ENCODE measurements at regions of chr12 and their contacts with region 1.

Region 1: DNA sequence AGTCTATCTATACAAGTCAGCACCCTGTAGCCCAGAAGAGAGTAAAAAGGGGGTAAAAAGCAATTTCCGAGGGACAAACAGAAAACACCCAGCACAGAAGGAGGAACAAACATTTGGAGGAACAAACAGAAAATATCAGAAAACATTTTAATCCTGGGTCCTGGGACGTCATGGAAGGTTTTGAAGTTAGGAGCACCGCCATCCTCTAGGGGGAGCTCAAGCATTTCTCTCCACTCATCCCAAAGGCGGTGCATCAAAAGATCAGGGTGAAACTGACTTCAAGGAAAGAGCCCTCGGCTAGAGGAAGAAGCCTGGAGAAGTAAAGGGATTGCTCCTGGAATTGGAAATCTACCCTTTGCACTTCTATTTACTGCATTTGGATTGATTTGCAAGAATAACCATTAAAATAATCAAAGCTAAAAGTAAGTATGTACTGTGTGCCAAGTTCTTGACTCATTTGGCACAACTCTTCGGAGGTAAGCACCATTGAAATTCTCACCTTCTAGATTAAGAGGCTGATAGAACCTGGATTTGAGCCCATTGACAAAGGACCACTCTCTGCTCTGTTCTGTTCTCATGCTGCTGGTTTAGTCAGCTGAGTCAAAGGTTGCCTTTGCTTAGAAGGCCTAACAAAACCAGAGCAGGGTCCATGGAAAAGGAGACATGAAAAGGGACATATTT is 17.2 kb upstream of the POC1B start:
- DNase-seq: peak; percentile 63
- H3K4me3 ChIP-seq: no peak overlapping the region
- H3K27ac ChIP-seq: no peak overlapping the region
- H3K4me1 ChIP-seq: peaks cover 0 to 5% of the 10 kb centered on the region in 2 experiments; a peak in 3 of 4 replicates
- H3K27me3 ChIP-seq: no peaks in the 10 kb centered on the region
- CTCF ChIP-seq: peak; percentile 93
- EP300 ChIP-seq: no peak
- RAD21 ChIP-seq: peak; percentile 98

Region 2: DNA sequence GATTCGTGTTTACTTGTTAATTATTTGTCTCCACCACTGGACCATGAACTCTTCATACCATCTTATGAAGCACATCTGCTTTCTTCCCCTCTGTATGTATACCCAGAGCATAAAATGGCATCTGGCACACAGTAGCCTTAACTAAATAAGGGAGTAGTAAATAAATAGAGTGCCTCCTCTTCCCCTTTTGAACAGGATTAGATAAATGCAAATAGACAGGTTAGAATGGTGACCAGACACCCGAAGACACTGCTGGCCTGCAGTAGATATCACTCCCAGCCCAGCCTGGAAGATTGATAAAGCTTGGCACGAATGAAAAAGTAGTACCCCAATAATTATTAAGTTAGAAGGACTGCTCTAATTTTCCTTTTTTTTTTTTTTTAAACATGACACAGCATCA is 25.3 kb before region 1 on chr12:
- CTCF ChIA-PET with region 1: no interaction called
- POLR2A ChIA-PET with region 1: no interaction called
- DNase-seq: no peak
- H3K4me3 ChIP-seq: no peak overlapping the region
- H3K27ac ChIP-seq: no peak overlapping the region
- H3K4me1 ChIP-seq: peaks cover 0 to 16% of the 10 kb centered on the region in 2 experiments; a peak in 1 of 4 replicates
- H3K27me3 ChIP-seq: no peaks in the 10 kb centered on the region
- CTCF ChIP-seq: no peak
- EP300 ChIP-seq: no peak
- RAD21 ChIP-seq: no peak

Region 3: GRCh38 chr12:89529738-89530137 is 13.3 kb before region 1 on chr12:
- CTCF ChIA-PET with region 1: interaction called, 11 read pairs
- POLR2A ChIA-PET with region 1: interaction called, 3 read pairs
- DNase-seq: peak; percentile 69
- H3K4me3 ChIP-seq: no peak overlapping the region; a peak in 1 of 4 replicates
- H3K27ac ChIP-seq: no peak overlapping the region
- H3K4me1 ChIP-seq: peaks cover 0 to 5% of the 10 kb centered on the region in 2 experiments; a peak in 2 of 4 replicates
- H3K27me3 ChIP-seq: no peaks in the 10 kb centered on the region
- CTCF ChIP-seq: peak; percentile 80
- EP300 ChIP-seq: no peak
- RAD21 ChIP-seq: peak; percentile 91

Region 4: DNA sequence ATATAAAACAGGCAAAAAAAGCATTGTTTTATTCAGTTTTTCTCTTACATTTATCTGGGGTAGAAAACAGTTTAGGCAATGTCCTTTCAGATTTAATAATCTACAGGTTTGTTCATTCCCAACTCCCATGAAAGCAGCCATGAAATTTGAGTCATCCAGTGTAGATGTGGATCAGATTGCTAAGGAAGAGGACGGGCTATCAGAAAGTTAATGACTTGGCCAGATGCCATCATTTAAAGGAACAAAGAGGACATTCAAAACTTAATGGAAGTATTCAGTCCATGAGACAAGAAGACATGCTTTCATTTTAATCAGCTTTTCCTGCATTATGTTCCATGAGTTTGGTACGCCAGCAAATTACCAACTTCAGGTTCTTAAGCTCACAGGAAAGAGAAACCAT is 13.9 kb after region 1 on chr12:
- CTCF ChIA-PET with region 1: interaction called, 22 read pairs
- POLR2A ChIA-PET with region 1: no interaction called
- DNase-seq: no peak
- H3K4me3 ChIP-seq: no peak overlapping the region
- H3K27ac ChIP-seq: 0 out of 4 replicates have a peak overlapping the region, but pooled peaks of 1 of the 2 experiments have one; percentile 13
- H3K4me1 ChIP-seq: no peaks in the 10 kb centered on the region
- H3K27me3 ChIP-seq: no peaks in the 10 kb centered on the region
- CTCF ChIP-seq: no peak
- EP300 ChIP-seq: no peak
- RAD21 ChIP-seq: no peak

Region 5: GRCh38 chr12:89573051-89573810 is 30.2 kb after region 1 on chr12:
- CTCF ChIA-PET with region 1: no interaction called
- POLR2A ChIA-PET with region 1: no interaction called
- DNase-seq: no peak
- H3K4me3 ChIP-seq: no peak overlapping the region
- H3K27ac ChIP-seq: no peak overlapping the region
- H3K4me1 ChIP-seq: peaks cover 7 to 14% of the 10 kb centered on the region in 2 experiments; a peak in 3 of 4 replicates
- H3K27me3 ChIP-seq: no peaks in the 10 kb centered on the region
- CTCF ChIP-seq: no peak
- EP300 ChIP-seq: no peak
- RAD21 ChIP-seq: no peak

Region 6: GRCh38 chr12:89707703-89708564 is 164.9 kb after region 1 on chr12:
- CTCF ChIA-PET with region 1: interaction called, 17 read pairs
- POLR2A ChIA-PET with region 1: no interaction called
- DNase-seq: peak; percentile 60
- H3K4me3 ChIP-seq: peak overlapping the region; percentile 91 to 94
- H3K27ac ChIP-seq: peak overlapping the region; percentile 85 to 96
- H3K4me1 ChIP-seq: peaks cover 0 to 2% of the 10 kb centered on the region in 2 experiments; a peak in 3 of 4 replicates
- H3K27me3 ChIP-seq: no peaks in the 10 kb centered on the region
- CTCF ChIP-seq: peak; percentile 17; the same call in 1 of the 2 replicates
- EP300 ChIP-seq: no peak
- RAD21 ChIP-seq: no peak

Region 7: GRCh38 chr12:90102957-90103652 is 560.1 kb after region 1 on chr12:
- CTCF ChIA-PET with region 1: interaction called, 29 read pairs
- POLR2A ChIA-PET with region 1: no interaction called
- DNase-seq: peak; percentile 19
- H3K4me3 ChIP-seq: no peak overlapping the region
- H3K27ac ChIP-seq: no peak overlapping the region
- H3K4me1 ChIP-seq: peaks cover 0 to 27% of the 10 kb centered on the region in 2 experiments; a peak in 2 of 4 replicates
- H3K27me3 ChIP-seq: no peaks in the 10 kb centered on the region
- CTCF ChIP-seq: peak; percentile 71
- EP300 ChIP-seq: no peak
- RAD21 ChIP-seq: peak; percentile 70

Region 8: GRCh38 chr12:90909069-90909770 is 1366.2 kb after region 1 on chr12:
- CTCF ChIA-PET with region 1: interaction called, 25 read pairs
- POLR2A ChIA-PET with region 1: no interaction called
- DNase-seq: peak; percentile 17
- H3K4me3 ChIP-seq: no peak overlapping the region; a peak in 1 of 4 replicates
- H3K27ac ChIP-seq: peak overlapping the region in 1 of 2 experiments; percentile 72; a peak in 1 of 4 replicates
- H3K4me1 ChIP-seq: peaks cover 0 to 19% of the 10 kb centered on the region in 2 experiments
- H3K27me3 ChIP-seq: no peaks in the 10 kb centered on the region
- CTCF ChIP-seq: peak; percentile 92
- EP300 ChIP-seq: no peak
- RAD21 ChIP-seq: peak; percentile 79

Region 9: GRCh38 chr12:90940872-90941499 is 1397.9 kb after region 1 on chr12:
- CTCF ChIA-PET with region 1: interaction called, 10 read pairs
- POLR2A ChIA-PET with region 1: no interaction called
- DNase-seq: peak; percentile 32
- H3K4me3 ChIP-seq: no peak overlapping the region
- H3K27ac ChIP-seq: no peak overlapping the region
- H3K4me1 ChIP-seq: peaks cover 0 to 15% of the 10 kb centered on the region in 2 experiments; a peak in 3 of 4 replicates
- H3K27me3 ChIP-seq: no peaks in the 10 kb centered on the region
- CTCF ChIP-seq: peak; percentile 84
- EP300 ChIP-seq: no peak
- RAD21 ChIP-seq: peak; percentile 81

Measured in SK-N-SH (cell line).